Activated CD4-positive, alpha-beta memory T cell treated with anti-CD3 and anti-CD28 coated beads for 36 hours (primary cell): ENCODE measurements at regions of chr7 and their contacts with region 1.

Region 1: DNA sequence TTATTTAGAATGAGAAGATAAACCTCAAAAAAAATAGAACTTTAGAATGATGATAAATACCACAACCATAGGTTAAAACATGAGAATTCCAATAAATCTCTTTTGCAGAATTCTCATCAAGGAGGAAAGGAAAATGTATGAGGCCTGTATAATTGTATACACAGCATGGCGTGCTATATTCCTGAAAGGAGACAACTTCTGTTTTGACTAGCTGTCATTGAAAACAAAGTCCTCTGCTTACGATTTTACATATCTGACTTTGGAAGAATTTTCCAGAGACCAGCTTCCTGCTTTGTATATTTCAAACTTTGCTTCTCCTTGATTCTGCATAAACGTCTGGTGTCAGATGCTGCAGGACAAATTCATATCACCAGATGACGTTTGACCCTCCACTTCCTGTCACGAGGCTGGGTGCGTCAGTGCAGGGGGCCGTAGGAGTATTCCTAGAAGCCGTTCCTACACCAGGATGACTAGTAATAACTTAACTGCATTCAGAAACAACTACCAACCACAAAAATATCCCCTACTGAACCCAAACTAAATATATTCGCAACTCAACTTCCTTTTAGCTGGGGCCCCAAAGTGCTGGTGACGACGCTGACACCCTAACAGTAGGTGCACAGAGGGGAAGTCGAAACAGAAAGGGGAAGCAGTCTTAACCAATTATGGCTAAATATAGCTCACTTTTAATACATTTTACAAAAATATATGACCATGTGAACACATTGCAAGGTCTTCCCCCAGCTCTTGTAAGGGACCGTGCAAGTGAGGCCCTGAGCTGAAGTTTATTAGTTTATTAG is 178.6 kb upstream of the INHBA start:
- DNase-seq: peak; percentile 91
- H3K4me3 Mint-ChIP-seq: peak overlapping the region; percentile 43
- H3K27ac Mint-ChIP-seq: peak overlapping the region; percentile 93
- H3K4me1 Mint-ChIP-seq: peaks cover 38% of the 10 kb centered on the region
- H3K27me3 Mint-ChIP-seq: peaks cover 1% of the 10 kb centered on the region

Region 2: GRCh38 chr7:41628901-41629300 is 252.6 kb before region 1 on chr7:
- CTCF ChIA-PET with region 1: no interaction called
- POLR2A ChIA-PET with region 1: no interaction called
- intact Hi-C with region 1: loop called (anchors 1 kb)
- DNase-seq: no peak
- H3K4me3 Mint-ChIP-seq: no peak overlapping the region
- H3K27ac Mint-ChIP-seq: no peak overlapping the region
- H3K4me1 Mint-ChIP-seq: peaks cover 5% of the 10 kb centered on the region
- H3K27me3 Mint-ChIP-seq: no peaks in the 10 kb centered on the region

Region 3: GRCh38 chr7:41809940-41810576 is 71.5 kb before region 1 on chr7:
- CTCF ChIA-PET with region 1: no interaction called
- POLR2A ChIA-PET with region 1: no interaction called
- intact Hi-C with region 1: no loop called
- DNase-seq: no peak
- H3K4me3 Mint-ChIP-seq: no peak overlapping the region
- H3K27ac Mint-ChIP-seq: no peak overlapping the region
- H3K4me1 Mint-ChIP-seq: no peaks in the 10 kb centered on the region
- H3K27me3 Mint-ChIP-seq: no peaks in the 10 kb centered on the region

Region 4: DNA sequence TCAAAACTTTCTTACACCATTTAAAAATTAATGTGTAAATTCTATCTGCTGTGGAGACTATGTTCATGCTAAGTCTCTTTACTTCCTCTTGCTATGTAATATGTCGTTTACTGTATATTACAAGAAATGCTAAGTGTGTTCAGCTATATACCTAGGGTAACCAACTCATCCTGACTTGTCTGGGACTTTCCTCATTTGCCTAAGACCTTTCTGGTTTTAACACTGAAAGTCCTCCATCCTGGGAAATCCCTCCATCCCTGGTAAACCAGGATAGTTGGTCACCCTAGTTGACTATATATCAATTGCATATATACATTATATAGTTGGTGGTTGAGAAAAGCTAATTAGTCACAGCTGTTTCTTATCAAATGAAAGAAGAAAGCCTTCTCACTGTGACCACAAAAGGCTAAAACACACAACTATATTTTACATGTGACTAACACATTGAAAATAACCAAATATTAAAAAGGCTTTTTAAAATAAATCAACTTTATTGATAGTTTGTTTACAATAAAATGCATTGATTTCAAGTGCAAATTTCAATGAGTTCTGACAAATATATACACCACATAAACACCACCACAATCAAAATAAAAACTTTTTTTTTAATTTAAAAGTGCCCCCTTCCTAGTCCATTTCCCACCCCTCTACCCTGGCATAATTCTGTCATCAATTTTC is 10.9 kb before region 1 on chr7:
- CTCF ChIA-PET with region 1: interaction called, 3 read pairs
- POLR2A ChIA-PET with region 1: interaction called, 3 read pairs
- intact Hi-C with region 1: loop called (anchors 1 kb)
- DNase-seq: no peak
- H3K4me3 Mint-ChIP-seq: no peak overlapping the region
- H3K27ac Mint-ChIP-seq: no peak overlapping the region
- H3K4me1 Mint-ChIP-seq: peaks cover 12% of the 10 kb centered on the region
- H3K27me3 Mint-ChIP-seq: peaks cover 23% of the 10 kb centered on the region

Region 5: GRCh38 chr7:42869131-42870020 is 987.8 kb after region 1 on chr7:
- CTCF ChIA-PET with region 1: no interaction called
- POLR2A ChIA-PET with region 1: no interaction called
- intact Hi-C with region 1: loop called (anchors 1 kb)
- DNase-seq: peak; percentile 77
- H3K4me3 Mint-ChIP-seq: peak overlapping the region; percentile 27
- H3K27ac Mint-ChIP-seq: peak overlapping the region; percentile 69
- H3K4me1 Mint-ChIP-seq: peaks cover 24% of the 10 kb centered on the region
- H3K27me3 Mint-ChIP-seq: peaks cover 19% of the 10 kb centered on the region

Region 6: DNA sequence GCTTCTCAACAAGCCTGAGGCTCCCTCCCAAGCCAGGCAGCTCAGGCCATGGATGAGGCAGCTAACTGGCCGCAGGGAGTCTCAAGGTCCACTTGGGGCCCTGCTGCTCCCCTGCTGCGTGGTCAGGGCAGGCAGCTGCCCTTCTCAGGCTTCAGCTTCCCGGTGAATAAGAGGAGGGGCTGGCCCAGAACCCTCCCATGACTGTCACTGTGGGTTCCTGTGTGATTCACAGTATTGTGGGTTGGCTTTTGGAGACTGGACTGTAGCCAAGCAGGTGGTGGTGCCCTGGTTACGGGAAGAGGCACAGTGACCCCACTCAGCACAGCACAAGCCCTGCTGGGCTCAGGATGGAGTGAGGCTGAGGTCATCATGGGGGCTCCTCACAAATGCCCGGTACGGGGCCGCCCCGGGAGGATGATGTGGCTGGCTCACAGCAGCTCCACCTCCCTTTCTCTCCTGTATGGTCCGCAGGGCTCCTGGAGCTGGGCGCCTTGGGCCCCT is 1420.7 kb after region 1 on chr7:
- CTCF ChIA-PET with region 1: no interaction called
- POLR2A ChIA-PET with region 1: no interaction called
- intact Hi-C with region 1: loop called (anchors 5 kb)
- DNase-seq: peak; percentile 64
- H3K4me3 Mint-ChIP-seq: no peak overlapping the region
- H3K27ac Mint-ChIP-seq: no peak overlapping the region
- H3K4me1 Mint-ChIP-seq: peaks cover 31% of the 10 kb centered on the region
- H3K27me3 Mint-ChIP-seq: peaks cover 25% of the 10 kb centered on the region